ENCODE measurements at regions of chr2 and their contacts with region 1.

Region 1: DNA sequence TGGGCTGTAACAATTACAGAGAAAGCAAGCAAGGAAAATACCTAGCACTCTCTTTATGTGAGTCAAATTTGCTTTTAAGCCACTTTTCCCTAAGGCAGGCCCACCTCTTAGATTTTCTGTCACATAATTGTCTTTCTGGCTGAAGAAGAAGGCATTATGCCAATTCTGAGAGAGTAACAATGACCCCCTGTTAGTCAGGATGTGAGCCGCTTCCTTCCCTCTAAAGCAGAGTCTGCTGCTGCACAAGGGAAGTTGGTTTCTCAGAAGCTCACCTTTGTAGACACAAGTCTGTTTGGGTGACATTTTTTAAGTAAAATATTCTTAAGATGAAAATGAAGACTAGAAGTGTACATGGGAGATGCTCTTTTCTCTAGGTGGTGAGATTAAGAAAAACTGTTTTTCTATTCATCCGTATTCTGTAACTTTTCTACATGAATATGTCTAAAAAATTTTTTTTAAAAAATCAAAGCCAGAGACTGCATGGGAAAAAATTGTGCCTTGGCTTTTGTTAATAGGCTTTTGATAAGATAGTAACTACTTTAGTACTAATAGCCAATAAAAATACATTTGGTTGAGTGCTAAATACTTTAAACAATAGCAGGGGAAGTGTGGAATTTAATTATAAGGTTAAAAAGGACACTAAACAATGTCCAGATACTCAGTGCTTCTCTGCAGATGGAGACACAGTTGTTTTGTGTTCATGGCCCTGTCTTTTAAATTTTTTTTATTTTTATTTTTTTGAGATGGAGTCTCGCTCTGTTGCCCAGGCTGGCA is 33.4 kb upstream of the VPS54 start:
- DNase-seq: no peak
- ATAC-seq: no peak
- H3K4me3 Mint-ChIP-seq: no peak overlapping the region
- H3K27ac Mint-ChIP-seq: no peak overlapping the region
- H3K4me1 Mint-ChIP-seq: peaks cover 24% of the 10 kb centered on the region
- H3K27me3 Mint-ChIP-seq: no peaks in the 10 kb centered on the region
- CTCF ChIP-seq: no peak

Region 2: DNA sequence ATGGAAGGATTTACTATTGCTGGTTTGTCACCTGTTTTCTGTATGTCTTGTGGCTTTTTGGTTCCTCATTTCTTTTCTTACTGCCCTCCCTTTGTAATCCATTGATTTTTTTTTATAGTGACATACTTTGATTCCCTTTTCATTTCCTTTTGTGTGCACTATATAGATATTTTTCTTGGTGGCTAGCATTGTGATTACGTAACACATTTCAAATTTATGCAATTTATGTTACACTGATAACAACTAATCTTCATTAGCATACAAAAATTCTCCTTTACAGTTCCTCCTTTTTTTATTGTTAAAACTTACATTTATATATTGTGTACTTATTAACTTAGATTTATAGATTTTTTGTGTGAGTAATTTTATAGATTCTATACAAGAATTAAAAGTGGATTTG is 921.5 kb before region 1 on chr2:
- CTCF ChIA-PET with region 1: no interaction called
- POLR2A ChIA-PET with region 1: no interaction called
- intact Hi-C with region 1: no loop called
- DNase-seq: no peak
- ATAC-seq: no peak
- H3K4me3 Mint-ChIP-seq: no peak overlapping the region
- H3K27ac Mint-ChIP-seq: no peak overlapping the region
- H3K4me1 Mint-ChIP-seq: peaks cover 3% of the 10 kb centered on the region
- H3K27me3 Mint-ChIP-seq: no peaks in the 10 kb centered on the region
- CTCF ChIP-seq: no peak

Region 3: DNA sequence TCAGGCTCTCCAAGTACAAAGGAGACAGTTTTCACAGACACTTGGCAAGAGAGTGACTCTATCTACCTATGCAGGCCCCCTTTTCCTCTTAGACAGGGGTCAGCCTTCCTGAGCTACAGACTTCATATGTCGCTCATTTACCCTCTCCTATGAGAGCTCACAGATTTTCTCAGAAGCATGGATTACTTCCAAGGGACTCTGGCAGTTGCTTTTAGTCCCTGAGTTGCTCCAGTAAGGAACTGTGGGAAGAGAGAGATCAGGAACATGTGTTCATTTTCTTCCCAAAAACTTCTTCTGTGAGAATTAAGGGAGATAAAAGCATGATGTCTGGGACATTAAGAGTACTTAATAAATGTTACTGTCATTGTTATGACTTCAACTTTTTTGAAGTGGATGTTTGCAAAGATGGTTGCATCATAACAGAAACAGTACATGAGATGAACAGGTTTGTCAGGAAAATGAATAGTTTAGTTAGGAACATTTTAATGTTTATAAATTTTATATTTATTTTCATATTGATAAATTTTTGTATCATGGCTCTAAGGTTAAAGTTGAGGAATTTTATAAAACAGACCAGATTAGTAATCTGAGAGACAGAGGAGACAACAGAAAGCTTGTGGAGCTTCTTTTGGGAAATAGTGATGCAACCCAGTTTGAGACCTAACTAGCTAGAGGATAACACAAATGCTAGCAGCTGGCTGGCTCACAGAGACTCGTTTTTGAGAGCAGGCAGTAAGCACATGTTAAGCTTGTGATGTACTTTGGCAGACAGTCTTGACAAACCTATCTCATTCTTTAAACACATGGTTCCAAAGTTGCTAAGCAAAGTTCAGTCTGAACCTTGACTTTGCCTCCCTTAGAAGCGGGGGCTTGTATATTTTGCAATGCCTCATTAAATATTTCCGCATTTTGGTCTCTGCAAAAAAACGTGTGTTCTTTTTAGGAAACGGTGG is 232.6 kb before region 1 on chr2:
- CTCF ChIA-PET with region 1: no interaction called
- POLR2A ChIA-PET with region 1: no interaction called
- intact Hi-C with region 1: no loop called
- DNase-seq: no peak
- ATAC-seq: no peak
- H3K4me3 Mint-ChIP-seq: no peak overlapping the region
- H3K27ac Mint-ChIP-seq: no peak overlapping the region
- H3K4me1 Mint-ChIP-seq: no peaks in the 10 kb centered on the region
- H3K27me3 Mint-ChIP-seq: no peaks in the 10 kb centered on the region
- CTCF ChIP-seq: no peak

Region 4: DNA sequence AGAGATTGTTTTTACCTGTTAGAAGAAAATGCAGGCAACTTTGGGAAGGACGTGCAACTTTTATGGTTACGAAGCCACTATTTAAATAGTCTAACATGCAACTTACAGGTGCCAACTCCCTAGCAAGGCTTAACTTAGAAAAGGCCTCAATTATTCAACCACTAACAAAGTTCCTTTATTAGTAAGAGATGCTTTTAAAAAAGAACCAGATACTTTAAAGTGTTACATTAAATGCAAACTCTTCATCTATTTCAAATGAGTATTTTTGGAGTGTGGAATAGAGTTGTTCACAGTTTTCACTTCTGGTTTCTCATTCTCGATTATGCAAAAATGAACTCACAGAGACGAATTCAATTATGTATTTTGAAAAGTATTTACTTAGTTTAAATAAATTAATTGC is 39.8 kb after region 1 on chr2:
- CTCF ChIA-PET with region 1: interaction called, 3 read pairs
- POLR2A ChIA-PET with region 1: interaction called, 7 read pairs
- intact Hi-C with region 1: loop called (anchors 2 kb)
- DNase-seq: no peak
- ATAC-seq: peak; percentile 31
- H3K4me3 Mint-ChIP-seq: peak overlapping the region; percentile 52
- H3K27ac Mint-ChIP-seq: peak overlapping the region; percentile 91
- H3K4me1 Mint-ChIP-seq: peaks cover 66% of the 10 kb centered on the region
- H3K27me3 Mint-ChIP-seq: no peaks in the 10 kb centered on the region
- CTCF ChIP-seq: no peak

Region 5: GRCh38 chr2:64144057-64145013 is 91.7 kb after region 1 on chr2 and contains the start of gene PELI1:
- CTCF ChIA-PET with region 1: interaction called, 7 read pairs
- POLR2A ChIA-PET with region 1: interaction called, 8 read pairs
- intact Hi-C with region 1: loop called (anchors 1 kb)
- DNase-seq: peak; percentile 83
- ATAC-seq: peak; percentile 95
- H3K4me3 Mint-ChIP-seq: peak within 1 kb of the TSS; percentile 96
- H3K27ac Mint-ChIP-seq: peak within 1 kb of the TSS; percentile 95
- H3K4me1 Mint-ChIP-seq: peaks cover 37% of the 10 kb centered on the region
- H3K27me3 Mint-ChIP-seq: no peaks in the 10 kb centered on the region
- CTCF ChIP-seq: no peak
- total RNA-seq, gene PELI1: 81.4 and 93.1 TPM in 2 replicates

Region 6: DNA sequence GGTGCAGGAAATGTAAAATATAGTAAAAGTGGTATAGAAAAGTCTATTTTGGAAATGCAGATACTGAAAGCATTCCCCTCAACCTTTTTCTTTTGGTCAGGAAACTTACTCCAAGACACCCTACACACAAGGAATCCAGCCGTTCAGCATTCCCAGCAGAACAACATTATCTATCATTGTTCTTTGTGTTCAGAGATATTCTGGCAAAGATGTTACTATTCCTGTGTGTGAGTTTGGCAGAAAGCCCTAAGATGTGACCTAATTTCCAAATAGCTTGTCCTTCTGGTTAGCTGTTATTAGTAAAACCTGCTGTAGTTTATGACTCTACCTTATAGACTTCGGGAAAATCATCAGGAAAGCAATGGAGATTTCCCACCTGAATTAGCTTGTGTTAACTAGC is 169.7 kb after region 1 on chr2:
- CTCF ChIA-PET with region 1: interaction called, 7 read pairs
- POLR2A ChIA-PET with region 1: interaction called, 12 read pairs
- intact Hi-C with region 1: no loop called
- DNase-seq: no peak
- ATAC-seq: no peak
- H3K4me3 Mint-ChIP-seq: no peak overlapping the region
- H3K27ac Mint-ChIP-seq: peak overlapping the region; percentile 95
- H3K4me1 Mint-ChIP-seq: peaks cover 63% of the 10 kb centered on the region
- H3K27me3 Mint-ChIP-seq: no peaks in the 10 kb centered on the region
- CTCF ChIP-seq: no peak

Region 7: DNA sequence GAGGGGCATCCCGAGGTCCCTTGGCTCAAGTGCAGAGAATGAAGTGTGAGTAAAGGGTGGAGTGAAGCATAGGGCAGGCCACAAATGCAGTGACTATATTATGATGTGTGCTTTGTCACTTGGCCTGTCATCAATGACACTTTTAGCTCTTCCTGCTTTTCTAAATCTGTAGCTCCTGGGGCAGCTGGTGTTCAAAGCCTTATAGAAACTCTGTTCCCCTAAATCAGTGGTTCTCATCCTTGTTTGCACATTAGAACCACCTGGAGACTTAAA is 265.8 kb after region 1 on chr2:
- CTCF ChIA-PET with region 1: interaction called, 13 read pairs
- POLR2A ChIA-PET with region 1: interaction called, 3 read pairs
- intact Hi-C with region 1: no loop called
- DNase-seq: no peak
- ATAC-seq: no peak
- H3K4me3 Mint-ChIP-seq: no peak overlapping the region
- H3K27ac Mint-ChIP-seq: no peak overlapping the region
- H3K4me1 Mint-ChIP-seq: peaks cover 7% of the 10 kb centered on the region
- H3K27me3 Mint-ChIP-seq: no peaks in the 10 kb centered on the region
- CTCF ChIP-seq: no peak

Region 8: DNA sequence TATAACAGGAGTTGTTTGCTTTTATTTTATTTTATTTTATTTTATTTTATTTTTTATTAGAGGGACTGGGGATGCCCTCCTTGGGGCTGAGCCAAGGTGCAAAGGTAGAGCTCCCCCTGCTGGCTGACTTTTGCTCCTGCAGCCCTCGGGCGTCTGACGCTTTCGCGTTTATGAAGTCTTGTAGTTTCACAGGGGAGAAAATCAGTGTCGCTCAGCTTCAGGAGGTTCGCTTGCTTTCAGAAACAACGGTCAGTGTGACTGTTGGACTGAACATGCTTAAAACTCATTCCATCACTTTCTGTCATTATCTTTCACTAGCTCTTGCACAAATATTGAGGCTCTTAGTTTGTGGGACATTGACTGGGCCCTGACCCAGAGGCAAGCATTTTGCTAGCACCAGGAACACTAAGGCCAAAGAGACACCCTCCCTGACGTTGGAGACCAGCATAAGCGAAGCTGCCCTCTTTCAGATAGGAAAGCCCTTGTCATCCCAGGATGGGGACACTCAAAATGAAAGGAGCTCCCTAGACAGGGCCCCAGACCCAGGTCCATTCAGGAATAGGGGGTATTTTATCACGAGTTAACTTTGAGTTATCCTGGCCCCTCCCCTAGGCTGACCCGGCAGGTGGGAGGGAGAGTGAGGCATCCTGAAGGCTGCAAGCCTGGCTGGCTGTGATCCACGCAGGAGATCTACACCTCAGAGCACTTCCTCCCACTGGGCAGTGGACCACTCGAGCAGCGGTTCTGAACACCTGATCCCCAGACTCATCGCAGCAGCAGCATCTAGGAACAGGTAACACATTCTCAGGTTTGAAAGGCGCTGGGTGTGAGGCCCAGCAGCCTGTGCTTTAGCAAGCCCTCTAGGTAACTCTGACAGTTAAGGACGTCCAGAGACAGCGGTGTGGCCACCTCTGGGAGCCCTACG is 435.7 kb after region 1 on chr2:
- CTCF ChIA-PET with region 1: interaction called, 24 read pairs
- POLR2A ChIA-PET with region 1: no interaction called
- intact Hi-C with region 1: loop called (anchors 1 kb)
- DNase-seq: peak; percentile 65
- ATAC-seq: peak; percentile 90
- H3K4me3 Mint-ChIP-seq: no peak overlapping the region
- H3K27ac Mint-ChIP-seq: no peak overlapping the region
- H3K4me1 Mint-ChIP-seq: peaks cover 4% of the 10 kb centered on the region
- H3K27me3 Mint-ChIP-seq: peaks cover 6% of the 10 kb centered on the region
- CTCF ChIP-seq: peak; percentile 56

Region 9: DNA sequence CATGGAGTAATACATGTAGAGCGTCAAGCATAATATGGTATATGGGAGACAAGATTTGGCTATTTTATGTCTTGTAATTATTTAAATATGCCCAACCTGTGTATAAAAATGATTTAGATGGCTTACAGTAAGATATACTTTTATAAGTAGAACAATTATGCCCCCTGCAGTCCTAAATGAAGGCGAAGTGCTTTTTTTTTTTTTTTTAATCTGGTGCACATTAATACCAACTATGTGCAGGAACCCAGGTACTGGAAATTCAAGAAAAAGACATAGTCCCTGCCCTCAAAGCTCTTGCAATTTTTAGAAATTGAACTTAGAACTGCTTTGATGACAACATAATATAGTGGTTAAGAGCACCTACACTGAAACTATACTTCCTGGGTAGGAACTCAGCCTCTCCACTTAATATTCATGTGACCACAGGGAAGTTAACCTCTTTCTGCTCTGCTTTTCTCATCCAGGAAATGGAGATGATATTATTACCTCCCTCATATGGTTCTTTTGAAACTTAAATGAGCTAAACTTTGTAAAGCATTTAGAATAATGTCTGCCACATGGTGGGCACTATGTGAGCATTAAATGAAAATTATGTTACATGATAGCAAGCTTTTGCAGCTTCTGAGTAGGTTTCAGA is 509.6 kb after region 1 on chr2:
- CTCF ChIA-PET with region 1: interaction called, 4 read pairs
- POLR2A ChIA-PET with region 1: no interaction called
- intact Hi-C with region 1: loop called (anchors 1 kb)
- DNase-seq: no peak
- ATAC-seq: peak; percentile 52
- H3K4me3 Mint-ChIP-seq: no peak overlapping the region
- H3K27ac Mint-ChIP-seq: no peak overlapping the region
- H3K4me1 Mint-ChIP-seq: peaks cover 34% of the 10 kb centered on the region
- H3K27me3 Mint-ChIP-seq: no peaks in the 10 kb centered on the region
- CTCF ChIP-seq: no peak